Activated CD4-positive, alpha-beta T cell treated with anti-CD3 and anti-CD28 coated beads, Interleukin-2, amount 10 ng/mL, durations not matched to agents 24 days and 14 days (primary cell): ENCODE measurements at regions of chr16 and their contacts with region 1.

Region 1: GRCh38 chr16:21554795-21555585 is 44.4 kb upstream of the METTL9 start:
- DNase-seq: peak; percentile 98
- H3K4me3 Mint-ChIP-seq: peak overlapping the region; percentile 71
- H3K27ac Mint-ChIP-seq: peak overlapping the region; percentile 84
- H3K4me1 Mint-ChIP-seq: peaks cover 7% of the 10 kb centered on the region
- H3K27me3 Mint-ChIP-seq: peaks cover 2% of the 10 kb centered on the region

Region 2: GRCh38 chr16:21158208-21159110 is 396.5 kb before region 1 on chr16 and contains the start of gene LDAF1:
- intact Hi-C with region 1: loop called (anchors 10 kb)
- DNase-seq: peak; percentile 96
- H3K4me3 Mint-ChIP-seq: peak within 1 kb of the TSS; percentile 91
- H3K27ac Mint-ChIP-seq: peak within 1 kb of the TSS; percentile 61
- H3K4me1 Mint-ChIP-seq: peaks cover 14% of the 10 kb centered on the region
- H3K27me3 Mint-ChIP-seq: no peaks in the 10 kb centered on the region
- total RNA-seq, gene LDAF1: 7.2 and 7.3 TPM in 2 replicates

Region 3: DNA sequence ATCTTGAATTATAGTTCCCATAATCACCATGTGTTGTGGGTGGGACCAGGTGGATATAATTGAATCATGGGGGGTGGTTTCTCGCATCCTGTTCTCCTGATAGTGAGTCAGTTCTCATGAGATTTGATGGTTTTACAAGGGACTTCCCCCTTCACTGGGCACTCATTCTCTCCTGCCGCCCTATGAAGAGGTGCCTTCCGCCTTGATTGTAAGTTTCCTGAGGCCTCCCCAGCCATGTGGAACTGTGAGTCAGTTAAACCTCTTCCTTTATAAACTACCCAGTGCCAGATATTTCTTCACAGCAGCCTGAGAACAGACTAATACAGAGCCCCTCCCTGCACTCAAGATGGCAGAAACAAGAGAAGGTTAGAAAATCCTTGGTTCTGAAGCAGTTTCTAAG is 370.2 kb before region 1 on chr16:
- intact Hi-C with region 1: loop called (anchors 10 kb)
- DNase-seq: no peak
- H3K4me3 Mint-ChIP-seq: no peak overlapping the region
- H3K27ac Mint-ChIP-seq: no peak overlapping the region
- H3K4me1 Mint-ChIP-seq: peaks cover 15% of the 10 kb centered on the region
- H3K27me3 Mint-ChIP-seq: no peaks in the 10 kb centered on the region

Region 4: DNA sequence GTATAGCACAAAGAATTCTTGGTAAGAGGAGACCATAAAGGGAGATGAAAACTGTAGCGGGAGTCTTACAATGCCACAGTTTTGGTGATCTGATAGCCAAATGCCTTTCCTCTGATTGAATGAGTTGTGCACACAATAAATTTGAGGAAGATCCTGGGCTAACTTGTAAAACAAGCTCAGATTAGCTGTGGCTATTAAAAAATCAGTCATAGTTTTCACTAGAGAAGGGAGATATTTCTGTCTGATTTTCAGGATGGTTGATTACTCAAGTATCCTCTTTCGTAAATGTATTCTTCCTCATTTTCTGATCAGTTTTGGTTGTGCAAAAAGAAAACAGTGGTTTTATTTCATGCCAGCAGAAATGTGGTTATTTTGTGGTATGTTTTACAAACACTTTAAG is 35.3 kb after region 1 on chr16:
- intact Hi-C with region 1: no loop called
- DNase-seq: no peak
- H3K4me3 Mint-ChIP-seq: no peak overlapping the region
- H3K27ac Mint-ChIP-seq: no peak overlapping the region
- H3K4me1 Mint-ChIP-seq: no peaks in the 10 kb centered on the region
- H3K27me3 Mint-ChIP-seq: peaks cover 4% of the 10 kb centered on the region